ENCODE measurements at regions of chr14 and their contacts with region 1.

Region 1: DNA sequence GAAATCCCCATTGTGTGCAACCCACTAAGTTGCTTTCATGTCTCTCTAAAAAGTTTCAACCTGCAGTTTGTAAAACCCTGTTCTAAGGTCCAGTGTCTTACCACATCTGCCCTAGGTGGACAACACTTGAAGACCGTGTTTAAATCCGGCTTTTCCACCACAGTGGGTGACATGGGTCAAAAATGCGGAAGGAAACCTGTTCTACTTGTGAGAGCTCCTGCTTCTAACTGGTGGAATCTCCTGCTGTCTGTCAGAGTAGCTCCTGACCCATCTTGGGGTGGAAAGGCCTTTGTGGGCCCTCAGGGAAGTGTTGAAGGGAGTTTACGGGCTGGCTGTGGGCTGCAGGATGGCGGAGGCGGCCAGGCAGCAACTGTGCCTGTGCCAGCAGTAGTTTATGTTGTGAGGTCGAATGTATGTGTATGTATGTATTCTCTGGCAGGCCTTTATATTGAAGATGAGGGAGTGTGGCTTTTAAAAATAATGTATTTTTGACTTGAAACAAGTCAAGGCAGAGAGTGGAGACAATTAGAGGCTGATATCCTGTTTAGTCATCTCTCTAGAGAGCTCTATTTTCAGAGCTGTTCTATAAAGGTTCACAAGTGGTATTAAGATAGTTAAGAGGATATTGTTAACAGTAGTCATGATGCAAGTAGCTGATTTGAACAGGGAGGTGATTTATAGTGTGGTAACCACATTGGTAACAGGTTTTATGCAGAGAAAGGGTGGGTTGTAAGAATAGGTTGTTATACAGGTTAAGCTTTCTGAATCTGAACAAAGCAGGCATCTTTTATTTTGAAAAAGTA is 67.0 kb downstream of the PRKCH start:
- DNase-seq: peak; percentile 78
- H3K4me3 Mint-ChIP-seq: no peak overlapping the region
- H3K27ac Mint-ChIP-seq: no peak overlapping the region
- H3K4me1 Mint-ChIP-seq: peaks cover 28% of the 10 kb centered on the region
- H3K27me3 Mint-ChIP-seq: no peaks in the 10 kb centered on the region

Region 2: DNA sequence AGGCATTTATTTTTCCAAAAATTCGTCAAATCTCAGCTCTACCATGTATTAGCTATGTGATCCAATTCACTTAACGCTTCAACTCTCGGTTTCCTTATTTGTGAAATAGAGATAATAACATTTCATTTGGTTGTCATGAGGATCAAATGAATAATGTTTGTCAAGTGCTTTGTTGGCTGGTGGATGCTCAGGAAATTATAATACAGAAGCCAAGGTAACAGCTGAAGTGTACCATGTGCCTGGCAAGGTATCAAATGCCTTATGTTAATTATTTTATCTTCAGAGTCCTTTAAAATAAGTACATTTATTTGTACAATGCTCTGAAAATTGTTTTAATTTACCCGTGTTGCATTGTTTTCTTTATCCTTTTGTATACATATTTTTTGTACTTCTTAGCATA is 73.1 kb before region 1 on chr14:
- intact Hi-C with region 1: no loop called
- DNase-seq: no peak
- H3K4me3 Mint-ChIP-seq: no peak overlapping the region
- H3K27ac Mint-ChIP-seq: no peak overlapping the region
- H3K4me1 Mint-ChIP-seq: no peaks in the 10 kb centered on the region
- H3K27me3 Mint-ChIP-seq: no peaks in the 10 kb centered on the region

Region 3: DNA sequence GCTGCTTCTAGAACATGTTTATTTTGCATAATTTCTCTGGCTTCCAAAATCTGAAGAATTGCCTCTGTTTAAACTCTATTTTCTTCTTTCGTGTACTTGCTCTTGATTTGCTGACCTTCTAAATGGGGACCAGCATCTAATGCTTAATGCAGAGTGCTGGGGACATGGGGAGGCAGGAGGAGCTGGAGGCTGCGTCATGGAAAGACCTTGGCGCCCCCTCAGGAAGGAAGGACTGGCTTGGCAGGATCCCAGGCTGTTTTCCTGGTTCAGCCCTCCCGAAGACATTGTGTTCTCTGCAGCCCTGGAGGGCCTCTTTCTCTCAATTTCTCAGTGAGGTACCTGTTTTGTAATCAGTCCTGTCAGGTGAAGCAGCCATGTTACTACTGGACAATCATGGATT is 61.5 kb before region 1 on chr14:
- intact Hi-C with region 1: loop called (anchors 2 kb)
- DNase-seq: peak; percentile 69
- H3K4me3 Mint-ChIP-seq: peak overlapping the region; percentile 87
- H3K27ac Mint-ChIP-seq: peak overlapping the region; percentile 90
- H3K4me1 Mint-ChIP-seq: peaks cover 59% of the 10 kb centered on the region
- H3K27me3 Mint-ChIP-seq: no peaks in the 10 kb centered on the region

Region 4: DNA sequence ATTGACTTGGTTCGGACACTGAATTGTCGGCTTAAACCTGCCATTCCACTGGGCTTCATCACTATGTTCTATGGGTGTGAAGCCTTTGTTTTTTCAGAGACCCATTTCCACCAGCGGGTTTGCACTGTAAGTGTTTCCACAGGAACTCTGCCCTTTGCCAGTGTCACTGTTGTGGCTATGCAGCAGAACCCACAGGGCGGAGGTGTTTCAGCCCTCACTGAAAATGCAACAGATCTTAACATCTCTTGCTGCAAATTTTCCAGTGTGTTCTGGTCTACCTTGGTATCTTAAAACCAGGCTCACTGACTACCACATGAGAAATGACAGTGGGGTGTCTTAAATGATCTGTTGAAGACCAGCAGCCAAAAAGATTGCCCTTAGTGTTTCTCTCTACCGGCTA is 45.9 kb before region 1 on chr14:
- intact Hi-C with region 1: loop called (anchors 2 kb)
- DNase-seq: peak; percentile 96
- H3K4me3 Mint-ChIP-seq: peak overlapping the region; percentile 86
- H3K27ac Mint-ChIP-seq: peak overlapping the region; percentile 95
- H3K4me1 Mint-ChIP-seq: peaks cover 80% of the 10 kb centered on the region
- H3K27me3 Mint-ChIP-seq: no peaks in the 10 kb centered on the region

Region 5: DNA sequence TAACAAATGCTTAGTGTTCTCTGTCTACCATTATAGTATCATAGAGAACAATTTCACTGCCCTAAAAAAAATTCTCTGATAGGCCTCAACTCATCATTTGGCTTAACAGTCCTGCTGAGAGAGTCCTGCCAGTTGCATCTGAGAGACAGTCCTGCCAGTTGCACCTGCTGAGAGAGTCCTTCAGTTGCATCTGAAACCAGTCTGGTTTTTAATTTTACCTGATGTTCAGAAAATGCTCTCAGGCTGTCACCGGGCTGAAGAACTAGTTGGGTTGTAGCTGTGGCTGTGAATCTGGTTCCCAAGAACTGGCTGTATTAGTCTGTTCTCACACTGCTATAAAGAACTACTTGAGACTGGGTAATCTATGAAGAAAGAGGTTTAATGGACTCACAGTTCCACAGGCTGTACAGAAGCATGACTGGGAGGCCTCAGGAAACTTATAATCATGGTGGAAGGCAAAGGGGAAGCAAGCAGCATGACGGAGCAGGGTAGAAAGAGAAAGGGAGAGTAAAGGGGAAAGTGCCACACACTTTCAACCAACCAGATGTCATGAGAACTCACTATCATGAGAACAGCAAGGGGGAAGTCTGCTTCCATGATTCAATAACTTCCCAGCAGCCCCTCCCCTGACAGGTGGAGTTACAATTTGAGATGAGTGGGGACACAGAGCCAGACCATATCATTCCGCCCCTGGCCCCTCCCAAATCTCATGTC is 15.4 kb before region 1 on chr14:
- intact Hi-C with region 1: loop called (anchors 2 kb)
- DNase-seq: no peak
- H3K4me3 Mint-ChIP-seq: no peak overlapping the region
- H3K27ac Mint-ChIP-seq: peak overlapping the region; percentile 76
- H3K4me1 Mint-ChIP-seq: peaks cover 61% of the 10 kb centered on the region
- H3K27me3 Mint-ChIP-seq: no peaks in the 10 kb centered on the region

Region 6: DNA sequence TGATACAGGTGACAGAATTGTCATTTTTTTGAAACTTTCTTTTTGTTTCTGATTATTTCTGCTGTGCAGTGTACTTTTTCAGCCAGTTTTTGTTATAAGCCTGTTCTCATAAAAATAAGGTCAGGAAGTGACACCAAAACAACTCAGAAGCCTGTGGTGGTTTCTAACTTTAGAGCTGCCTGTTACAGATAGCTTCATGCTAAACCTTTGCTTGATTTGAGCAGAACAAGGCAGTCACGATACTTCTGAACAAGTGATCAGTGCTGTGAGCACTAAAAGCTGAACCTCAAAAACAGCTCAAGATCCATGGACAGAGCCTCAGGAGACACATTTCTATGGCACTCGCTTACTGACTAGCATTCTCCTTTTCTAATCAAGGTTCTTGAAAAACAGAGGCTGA is 15.0 kb after region 1 on chr14:
- intact Hi-C with region 1: loop called (anchors 1 kb)
- DNase-seq: peak; percentile 85
- H3K4me3 Mint-ChIP-seq: peak overlapping the region; percentile 71
- H3K27ac Mint-ChIP-seq: peak overlapping the region; percentile 90
- H3K4me1 Mint-ChIP-seq: peaks cover 65% of the 10 kb centered on the region
- H3K27me3 Mint-ChIP-seq: no peaks in the 10 kb centered on the region

Region 7: DNA sequence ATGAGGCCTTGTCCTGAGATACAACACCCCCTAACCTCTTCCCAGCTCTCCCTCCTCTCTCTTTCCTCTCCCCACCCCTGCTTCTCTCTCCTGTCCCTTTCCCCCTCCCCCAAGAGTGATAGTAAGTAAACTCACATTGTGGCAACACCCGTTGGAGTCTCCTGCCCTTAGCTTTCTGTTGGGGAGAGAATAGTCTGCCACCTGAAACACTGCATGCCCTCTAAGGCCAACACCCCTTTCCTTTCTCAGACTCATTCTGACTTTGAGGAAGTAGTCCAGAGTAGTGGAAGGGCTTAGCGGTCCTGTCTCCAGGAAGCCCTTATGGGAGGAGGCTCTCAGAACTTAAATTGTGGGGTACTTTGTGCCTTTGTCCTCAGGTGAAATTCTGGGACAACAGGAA is 28.2 kb after region 1 on chr14:
- intact Hi-C with region 1: loop called (anchors 2 kb)
- DNase-seq: peak; percentile 70
- H3K4me3 Mint-ChIP-seq: peak overlapping the region; percentile 52
- H3K27ac Mint-ChIP-seq: peak overlapping the region; percentile 75
- H3K4me1 Mint-ChIP-seq: peaks cover 58% of the 10 kb centered on the region
- H3K27me3 Mint-ChIP-seq: no peaks in the 10 kb centered on the region

Region 8: DNA sequence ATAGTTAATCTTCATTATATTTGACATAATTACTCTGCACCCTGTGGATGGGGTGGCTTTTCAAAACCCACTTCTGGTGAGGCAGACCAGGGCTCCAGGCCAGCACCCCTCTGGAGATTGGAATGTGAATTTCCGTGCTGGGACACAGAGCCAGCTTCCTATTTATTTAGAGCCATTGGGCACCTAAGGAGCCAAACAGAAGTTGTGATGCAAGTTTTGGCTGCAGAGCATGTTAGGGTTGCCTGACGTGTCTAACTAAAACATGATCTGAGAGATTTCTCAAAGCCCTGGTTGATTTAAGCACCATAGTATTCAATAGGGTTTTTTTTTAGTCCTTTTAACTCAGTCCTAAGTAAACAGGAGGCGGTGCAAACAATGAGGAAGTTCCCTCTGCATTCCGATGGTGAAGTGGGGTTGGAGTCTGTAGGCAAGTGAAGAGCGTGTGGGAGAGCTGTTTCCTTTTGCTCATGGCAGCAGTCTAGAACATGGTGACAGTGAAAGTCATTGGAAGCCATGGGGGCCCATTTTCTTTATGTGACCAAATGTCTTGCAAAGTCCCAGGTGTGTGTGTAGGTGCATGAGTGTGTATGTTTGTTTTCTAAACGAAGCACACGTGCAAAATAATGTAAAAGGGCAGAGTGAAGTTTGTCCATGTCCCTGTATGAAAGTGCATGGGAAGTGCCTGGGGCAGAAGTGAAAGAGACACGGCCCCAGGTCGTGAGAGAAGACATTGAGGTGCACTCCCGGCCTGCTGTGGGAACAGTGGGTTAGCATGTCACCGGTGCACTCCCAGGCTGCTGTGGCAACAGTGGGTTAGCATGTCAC is 50.7 kb after region 1 on chr14:
- intact Hi-C with region 1: loop called (anchors 1 kb)
- DNase-seq: peak; percentile 85
- H3K4me3 Mint-ChIP-seq: peak overlapping the region; percentile 87
- H3K27ac Mint-ChIP-seq: peak overlapping the region; percentile 96
- H3K4me1 Mint-ChIP-seq: peaks cover 78% of the 10 kb centered on the region
- H3K27me3 Mint-ChIP-seq: no peaks in the 10 kb centered on the region

Region 9: GRCh38 chr14:61470261-61470960 is 82.0 kb after region 1 on chr14:
- intact Hi-C with region 1: no loop called
- DNase-seq: no peak
- H3K4me3 Mint-ChIP-seq: peak overlapping the region; percentile 78
- H3K27ac Mint-ChIP-seq: peak overlapping the region; percentile 96
- H3K4me1 Mint-ChIP-seq: peaks cover 72% of the 10 kb centered on the region
- H3K27me3 Mint-ChIP-seq: no peaks in the 10 kb centered on the region

Measured in activated CD4-positive, alpha-beta T cell treated with anti-CD3 and anti-CD28 coated beads, Interleukin-2, amount 10 ng/mL, durations not matched to agents 24 days and 14 days (primary cell).